A549 (cell line): ENCODE measurements at regions of chr20 and their contacts with region 1.

Region 1: DNA sequence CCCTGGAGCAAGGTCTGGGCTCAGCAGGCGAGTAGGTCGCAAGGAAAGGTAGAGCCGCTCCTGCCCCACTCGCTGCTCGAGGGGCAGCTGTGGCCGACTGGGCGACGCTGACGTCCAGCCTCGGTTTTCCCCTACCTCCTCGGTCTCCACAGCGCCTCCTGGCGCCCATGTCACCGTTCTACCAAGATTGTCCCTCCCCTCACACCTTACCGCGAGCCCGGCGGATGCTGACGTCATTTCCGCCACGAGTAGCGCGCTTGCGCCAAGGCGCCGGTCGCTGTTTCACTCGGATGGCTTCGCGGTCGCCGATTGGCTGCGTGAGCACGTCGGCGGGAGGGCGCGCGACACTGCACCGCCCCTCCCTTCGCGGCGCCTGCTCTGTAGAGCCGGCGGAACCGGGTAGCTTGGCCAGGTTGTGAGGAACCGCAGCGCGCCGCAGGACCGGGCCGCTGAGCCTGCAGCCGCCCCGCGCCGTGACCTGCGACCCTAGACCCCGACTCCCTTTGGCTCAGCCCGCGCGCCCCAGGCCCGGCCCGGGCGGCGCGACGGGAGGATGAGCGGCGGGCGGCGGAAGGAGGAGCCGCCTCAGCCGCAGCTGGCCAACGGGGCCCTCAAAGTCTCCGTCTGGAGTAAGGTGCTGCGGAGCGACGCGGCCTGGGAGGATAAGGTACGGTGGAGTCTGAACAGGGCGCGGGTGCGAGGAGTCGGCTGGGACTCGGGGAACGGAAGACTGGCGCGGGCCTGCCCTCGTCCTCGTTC is at the start of gene RAB5IF:
- DNase-seq: peak; percentile 85 to 99
- ATAC-seq: peak; percentile 96 to 97
- H3K4me3 ChIP-seq: peak within 1 kb of the TSS; percentile 98
- H3K27ac ChIP-seq: peak within 1 kb of the TSS; percentile 95 to 96
- H3K4me1 ChIP-seq: peaks cover 22% of the 10 kb centered on the region
- CTCF ChIP-seq: peak; percentile 90
- EP300 ChIP-seq: no peak
- POLR2A ChIP-seq: peak; percentile 81
- RAD21 ChIP-seq: peak; percentile 66 to 73
- polyA plus RNA-seq, gene RAB5IF: 344 and 345 TPM in 2 replicates

Region 2: GRCh38 chr20:36355469-36356171 is 250.0 kb before region 1 on chr20:
- CTCF ChIA-PET with region 1: no interaction called
- POLR2A ChIA-PET with region 1: no interaction called
- DNase-seq: peak in 1 of 2 experiments; percentile 38
- ATAC-seq: peak in 1 of 2 experiments; percentile 74; a peak in 3 of 6 replicates
- H3K4me3 ChIP-seq: no peak overlapping the region
- H3K27ac ChIP-seq: no peak overlapping the region
- H3K4me1 ChIP-seq: 0 out of 3 replicates have a peak, but pooled peaks cover 4% of the 10 kb centered on the region
- CTCF ChIP-seq: no peak
- EP300 ChIP-seq: no peak
- POLR2A ChIP-seq: no peak
- RAD21 ChIP-seq: no peak

Region 3: GRCh38 chr20:36562724-36563123 is 42.9 kb before region 1 on chr20:
- CTCF ChIA-PET with region 1: interaction called, 16 read pairs
- POLR2A ChIA-PET with region 1: no interaction called
- DNase-seq: no peak
- ATAC-seq: no peak
- H3K4me3 ChIP-seq: no peak overlapping the region
- H3K27ac ChIP-seq: no peak overlapping the region
- H3K4me1 ChIP-seq: no peaks in the 10 kb centered on the region
- CTCF ChIP-seq: no peak
- EP300 ChIP-seq: no peak
- POLR2A ChIP-seq: no peak
- RAD21 ChIP-seq: no peak

Region 4: DNA sequence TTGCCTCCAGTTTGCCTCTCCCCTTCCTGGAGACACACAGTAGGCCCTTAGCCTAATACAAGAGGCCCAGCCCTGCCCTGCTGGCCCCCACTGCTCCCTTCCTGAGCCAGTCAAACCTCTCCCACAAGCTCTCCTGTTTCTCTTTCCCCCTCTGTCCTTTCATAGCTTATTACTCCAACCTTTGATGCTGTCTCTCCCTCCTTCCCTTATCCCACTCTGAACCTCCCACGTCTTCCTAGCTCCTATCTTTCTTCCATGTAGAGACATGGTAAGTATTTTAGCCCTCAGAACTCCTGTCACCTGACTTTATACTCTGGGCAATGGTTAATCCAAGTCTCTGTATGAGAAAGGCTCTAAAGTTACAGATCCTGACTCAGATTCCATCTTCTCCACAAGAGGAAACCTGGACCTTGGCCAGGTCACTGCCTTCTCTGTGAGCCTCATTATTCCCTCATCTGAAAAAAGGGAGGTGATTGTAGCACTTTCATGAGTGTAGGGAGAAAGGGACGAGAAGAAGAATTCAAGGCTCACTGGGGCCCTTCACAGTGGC is 25.5 kb before region 1 on chr20:
- CTCF ChIA-PET with region 1: interaction called, 54 read pairs
- POLR2A ChIA-PET with region 1: no interaction called
- DNase-seq: no peak
- ATAC-seq: peak in 1 of 2 experiments; percentile 42; a peak in 1 of 6 replicates
- H3K4me3 ChIP-seq: no peak overlapping the region
- H3K27ac ChIP-seq: no peak overlapping the region
- H3K4me1 ChIP-seq: peaks cover 6% of the 10 kb centered on the region
- CTCF ChIP-seq: no peak
- EP300 ChIP-seq: no peak
- POLR2A ChIP-seq: no peak
- RAD21 ChIP-seq: no peak

Region 5: GRCh38 chr20:36754656-36755222 is 149.2 kb after region 1 on chr20:
- CTCF ChIA-PET with region 1: interaction called, 11 read pairs
- POLR2A ChIA-PET with region 1: no interaction called
- DNase-seq: peak; percentile 76 to 77
- ATAC-seq: peak; percentile 96 to 97
- H3K4me3 ChIP-seq: no peak overlapping the region
- H3K27ac ChIP-seq: no peak overlapping the region
- H3K4me1 ChIP-seq: no peaks in the 10 kb centered on the region
- CTCF ChIP-seq: peak; percentile 68
- EP300 ChIP-seq: no peak
- POLR2A ChIP-seq: no peak
- RAD21 ChIP-seq: peak; percentile 66 to 67

Region 6: GRCh38 chr20:36861875-36862801 is 256.6 kb after region 1 on chr20:
- CTCF ChIA-PET with region 1: interaction called, 15 read pairs
- POLR2A ChIA-PET with region 1: no interaction called
- DNase-seq: peak; percentile 91 to 96
- ATAC-seq: peak; percentile 47 to 80
- H3K4me3 ChIP-seq: peak overlapping the region; percentile 85
- H3K27ac ChIP-seq: peak overlapping the region; percentile 79 to 96
- H3K4me1 ChIP-seq: peaks cover 31% of the 10 kb centered on the region; the same call in 2 of the 3 replicates
- CTCF ChIP-seq: no peak
- EP300 ChIP-seq: no peak
- POLR2A ChIP-seq: peak; percentile 76
- RAD21 ChIP-seq: no peak; a peak in 1 of 5 replicates